PC-9 (cell line): ENCODE measurements at regions of chr3 and their contacts with region 1.

Region 1: DNA sequence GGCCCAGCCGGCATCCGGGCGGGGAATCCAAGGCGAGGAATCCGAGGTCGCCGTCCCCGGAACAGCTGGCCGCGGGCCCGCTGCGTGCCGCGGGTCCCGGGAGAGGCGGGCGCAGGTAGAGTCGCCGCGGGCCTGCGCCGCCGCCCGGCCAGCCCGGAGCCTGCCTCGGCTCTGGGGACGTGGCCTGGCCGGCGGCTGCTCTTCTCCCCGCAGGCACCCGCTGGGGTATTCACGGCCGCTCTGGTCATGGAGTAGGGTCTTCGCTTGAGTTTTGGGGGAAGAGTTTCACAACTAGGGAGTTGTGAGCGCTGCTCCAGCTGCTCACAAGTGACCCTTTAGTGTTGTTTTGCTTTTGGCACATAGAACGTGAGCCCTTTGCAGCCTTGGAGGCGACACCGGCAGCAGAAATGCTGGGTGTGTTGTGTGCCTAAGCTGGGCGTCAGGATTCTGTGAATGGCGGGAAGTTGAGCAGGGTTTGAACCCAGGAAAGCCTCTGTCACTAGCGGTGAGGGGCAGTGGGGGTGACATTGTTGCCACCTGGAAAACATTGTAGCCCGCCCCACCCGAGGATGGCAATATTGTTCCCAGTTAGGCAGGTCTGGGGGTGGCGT is 4.0 kb downstream of the TRIM71 start:
- DNase-seq: no peak
- H3K4me3 ChIP-seq: no peak overlapping the region
- H3K27ac ChIP-seq: no peak overlapping the region
- H3K4me1 ChIP-seq: no peaks in the 10 kb centered on the region
- H3K27me3 ChIP-seq: no peaks in the 10 kb centered on the region
- CTCF ChIP-seq: no peak

Region 2: DNA sequence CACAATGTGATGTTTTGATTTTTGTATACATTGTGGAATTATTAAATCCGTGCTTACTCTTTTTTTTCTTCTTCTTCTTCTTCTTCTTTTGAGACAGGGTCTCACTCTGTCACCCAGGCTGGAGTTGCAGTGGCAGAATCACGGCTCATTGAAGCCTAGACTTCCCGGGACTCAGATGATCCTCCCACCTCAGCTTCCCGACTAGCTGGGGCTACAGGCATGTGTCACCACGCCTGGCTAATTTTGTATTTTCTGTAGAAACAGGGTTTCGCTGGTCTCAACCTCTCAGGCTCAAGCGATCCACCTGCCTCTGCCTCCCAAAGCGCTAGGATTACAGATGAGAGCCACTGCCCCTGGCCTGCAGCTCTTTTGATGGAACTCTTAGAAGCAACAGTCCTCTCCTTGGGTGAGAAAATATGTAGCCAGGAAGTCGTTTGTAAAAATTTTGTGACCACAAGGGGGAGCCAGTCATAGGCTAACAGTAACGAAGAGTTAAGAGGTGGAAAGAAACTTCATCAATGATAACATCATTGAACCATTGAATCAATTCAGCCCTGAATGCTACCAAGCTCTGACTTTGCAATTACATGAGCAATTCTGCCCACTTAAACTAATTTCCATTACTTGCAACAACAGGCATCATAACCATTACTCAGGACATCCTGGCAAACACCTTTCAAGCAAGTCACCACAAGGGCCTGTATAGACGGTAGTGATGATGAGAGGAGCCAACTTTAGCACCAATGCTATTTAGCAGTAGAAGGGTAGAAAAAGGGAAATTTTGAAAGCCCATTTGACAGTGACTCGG is 446.8 kb before region 1 on chr3:
- CTCF ChIA-PET with region 1: interaction called, 10 read pairs
- POLR2A ChIA-PET with region 1: no interaction called
- intact Hi-C with region 1: no loop called
- DNase-seq: peak in 1 of 2 experiments; percentile 44
- H3K4me3 ChIP-seq: no peak overlapping the region
- H3K27ac ChIP-seq: no peak overlapping the region
- H3K4me1 ChIP-seq: no peaks in the 10 kb centered on the region
- H3K27me3 ChIP-seq: no peaks in the 10 kb centered on the region
- CTCF ChIP-seq: peak; percentile 67

Region 3: DNA sequence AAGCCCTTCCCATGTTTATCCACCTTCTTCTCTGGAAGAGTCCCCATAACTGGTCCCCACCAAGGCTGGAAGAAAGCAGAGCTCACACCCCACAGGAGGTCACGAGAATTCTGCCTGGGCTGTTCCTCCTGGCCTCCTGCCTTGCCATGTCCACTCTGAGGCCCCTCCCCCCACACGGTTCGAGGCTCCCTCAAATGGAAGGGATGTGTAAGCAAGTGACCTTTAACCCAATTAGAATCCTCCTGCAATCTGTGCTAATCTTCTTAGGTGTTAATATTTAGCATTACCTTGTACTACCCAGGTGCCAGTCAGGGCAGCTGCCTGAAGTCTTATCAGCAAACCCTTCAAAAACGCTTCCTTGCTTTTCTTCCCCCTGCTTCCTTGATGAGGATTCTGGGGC is 218.7 kb before region 1 on chr3:
- CTCF ChIA-PET with region 1: no interaction called
- POLR2A ChIA-PET with region 1: no interaction called
- intact Hi-C with region 1: no loop called
- DNase-seq: no peak
- H3K4me3 ChIP-seq: no peak overlapping the region
- H3K27ac ChIP-seq: no peak overlapping the region
- H3K4me1 ChIP-seq: no peaks in the 10 kb centered on the region
- H3K27me3 ChIP-seq: no peaks in the 10 kb centered on the region
- CTCF ChIP-seq: no peak

Region 4: DNA sequence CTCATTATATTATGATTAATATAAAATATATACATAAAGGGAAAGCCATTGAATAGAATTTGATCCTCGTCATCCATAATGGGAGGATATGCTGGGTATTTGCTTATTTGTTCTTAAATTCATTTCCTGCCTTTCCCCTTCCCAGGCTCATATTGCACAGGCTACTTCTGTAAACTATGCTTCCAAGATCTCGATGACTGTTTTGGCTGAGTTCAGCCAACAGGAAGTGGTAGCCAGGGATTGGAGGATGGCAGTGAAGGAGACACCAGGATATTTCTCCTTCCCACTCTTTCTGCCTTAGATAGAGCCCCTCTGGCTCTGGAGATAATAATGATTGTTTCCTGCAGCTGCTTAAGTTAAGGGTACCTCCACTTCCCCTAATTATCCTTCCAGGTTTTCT is 206.8 kb before region 1 on chr3:
- CTCF ChIA-PET with region 1: no interaction called
- POLR2A ChIA-PET with region 1: no interaction called
- intact Hi-C with region 1: no loop called
- DNase-seq: no peak
- H3K4me3 ChIP-seq: no peak overlapping the region
- H3K27ac ChIP-seq: no peak overlapping the region
- H3K4me1 ChIP-seq: peaks cover 7% of the 10 kb centered on the region
- H3K27me3 ChIP-seq: no peaks in the 10 kb centered on the region
- CTCF ChIP-seq: no peak

Region 5: DNA sequence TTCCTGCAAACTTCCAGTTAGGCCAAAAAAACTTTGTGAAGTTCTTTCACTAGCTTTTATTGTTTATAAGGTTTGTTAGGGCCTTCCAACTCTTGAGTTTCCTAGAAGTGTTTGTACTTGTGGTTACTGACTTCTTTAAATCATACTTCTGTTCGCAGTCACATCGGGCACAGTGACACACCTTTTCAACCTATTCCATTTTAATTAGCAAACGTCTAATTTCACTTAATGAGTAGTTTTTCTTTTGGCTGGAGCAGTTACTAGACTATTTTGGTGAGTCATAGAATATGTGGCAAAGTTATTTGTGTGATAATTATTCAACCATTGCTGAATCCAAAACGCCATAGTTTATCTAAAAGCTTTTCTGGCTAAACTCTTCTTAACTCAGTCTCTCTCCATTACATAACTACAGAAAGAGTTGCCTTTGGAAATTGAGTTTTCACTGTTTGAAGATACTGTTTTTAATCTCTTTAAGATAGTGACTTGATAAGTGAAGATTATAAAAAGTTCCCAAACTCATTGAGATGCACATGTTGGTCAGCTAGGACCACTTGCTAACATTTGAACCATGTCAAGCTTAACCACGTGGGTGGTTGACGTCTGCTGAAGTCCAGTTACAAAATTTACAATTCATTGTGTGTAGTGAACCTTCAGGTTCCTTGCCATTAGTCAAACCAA is 115.3 kb before region 1 on chr3:
- CTCF ChIA-PET with region 1: no interaction called
- POLR2A ChIA-PET with region 1: no interaction called
- intact Hi-C with region 1: no loop called
- DNase-seq: no peak
- H3K4me3 ChIP-seq: no peak overlapping the region
- H3K27ac ChIP-seq: no peak overlapping the region
- H3K4me1 ChIP-seq: no peaks in the 10 kb centered on the region
- H3K27me3 ChIP-seq: no peaks in the 10 kb centered on the region
- CTCF ChIP-seq: no peak

Region 6: GRCh38 chr3:32733631-32734229 is 88.1 kb before region 1 on chr3:
- CTCF ChIA-PET with region 1: no interaction called
- POLR2A ChIA-PET with region 1: no interaction called
- intact Hi-C with region 1: no loop called
- DNase-seq: no peak
- H3K4me3 ChIP-seq: no peak overlapping the region
- H3K27ac ChIP-seq: no peak overlapping the region
- H3K4me1 ChIP-seq: no peaks in the 10 kb centered on the region
- H3K27me3 ChIP-seq: no peaks in the 10 kb centered on the region
- CTCF ChIP-seq: peak; percentile 60

Region 7: GRCh38 chr3:32922078-32922477 is 100.3 kb after region 1 on chr3:
- CTCF ChIA-PET with region 1: no interaction called
- POLR2A ChIA-PET with region 1: interaction called, 12 read pairs
- intact Hi-C with region 1: no loop called
- DNase-seq: no peak
- H3K4me3 ChIP-seq: no peak overlapping the region
- H3K27ac ChIP-seq: no peak overlapping the region
- H3K4me1 ChIP-seq: no peaks in the 10 kb centered on the region
- H3K27me3 ChIP-seq: no peaks in the 10 kb centered on the region
- CTCF ChIP-seq: no peak